Ovary (tissue), 10 donors: ENCODE measurements at regions of chr12 and their contacts with region 1.

Region 1: GRCh38 chr12:63924781-63925180 is 80.3 kb downstream of the SRGAP1 start:
- DNase-seq: no peak
- H3K4me3 ChIP-seq: no peak overlapping the region
- H3K27ac ChIP-seq: no peak overlapping the region
- H3K4me1 ChIP-seq: no peaks in the 10 kb centered on the region
- H3K27me3 ChIP-seq: no peaks in the 10 kb centered on the region
- CTCF ChIP-seq: no peak
- EP300 ChIP-seq: no peak
- POLR2A ChIP-seq: no peak

Region 2: DNA sequence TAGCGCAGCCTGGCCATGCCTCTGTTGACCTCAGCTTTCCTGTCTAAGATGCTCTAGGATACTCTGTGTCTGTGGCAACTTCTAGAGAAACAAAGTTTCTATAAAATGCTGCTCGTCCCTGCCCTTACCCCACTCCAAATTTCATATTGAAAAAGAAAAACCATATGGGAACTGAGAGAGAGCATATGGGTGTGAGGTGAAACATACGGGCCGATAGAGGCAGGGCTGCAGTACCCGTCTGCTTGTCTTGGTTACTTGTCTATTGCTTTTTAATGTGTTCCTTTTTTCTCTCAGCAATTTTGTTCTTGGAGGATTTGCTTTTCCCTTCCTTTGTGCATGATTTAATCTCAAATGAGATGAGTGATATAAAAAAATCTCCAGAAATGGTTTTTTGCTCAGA is 32.7 kb after region 1 on chr12:
- intact Hi-C with region 1: loop called in 1 of 4 experiments (anchors 1 kb)
- DNase-seq: no peak
- H3K4me3 ChIP-seq: no peak overlapping the region
- H3K27ac ChIP-seq: no peak overlapping the region
- H3K4me1 ChIP-seq: peaks cover 3% of the 10 kb centered on the region
- H3K27me3 ChIP-seq: no peaks in the 10 kb centered on the region
- CTCF ChIP-seq: no peak
- EP300 ChIP-seq: no peak
- POLR2A ChIP-seq: no peak